Dorsolateral prefrontal cortex (tissue), 120 donors: ENCODE measurements at regions of chr6 and their contacts with region 1.

Region 1: GRCh38 chr6:166999145-166999883 is at the start of gene CEP43:
- DNase-seq: peak; percentile 80 to 96 (median 91)
- H3K4me3 ChIP-seq: peak within 1 kb of the TSS; percentile 77 to 98 (median 94)
- H3K27ac ChIP-seq: peak within 1 kb of the TSS in 55 of 59 donors; percentile 13 to 89 (median 76)
- H3K27me3 ChIP-seq: no peaks in the 10 kb centered on the region
- CTCF ChIP-seq: peak in 50 of 56 donors; percentile 18 to 78 (median 51)
- total RNA-seq, gene CEP43: 17.9 to 39.4 (median 27.8) TPM

Region 2: GRCh38 chr6:166956444-166957086 is 42.7 kb before region 1 on chr6 and contains the start of gene RNASET2:
- intact Hi-C with region 1: loop called in 1 of 2 experiments (anchors 2 kb)
- DNase-seq: peak; percentile 86 to 96 (median 91)
- H3K4me3 ChIP-seq: peak within 1 kb of the TSS; percentile 63 to 99 (median 87)
- H3K27ac ChIP-seq: peak within 1 kb of the TSS in 56 of 59 donors; percentile 28 to 95 (median 85)
- H3K27me3 ChIP-seq: no peaks in the 10 kb centered on the region
- CTCF ChIP-seq: peak in 8 of 56 donors; percentile 10 to 43 (median 21)
- total RNA-seq, gene RNASET2: 26.9 to 141 (median 66.3) TPM

Region 3: GRCh38 chr6:167044696-167045095 is 45.4 kb after region 1 on chr6:
- intact Hi-C with region 1: loop called in 1 of 2 experiments (anchors 5 kb)
- DNase-seq: no peak
- H3K4me3 ChIP-seq: no peak overlapping the region
- H3K27ac ChIP-seq: no peak overlapping the region
- H3K27me3 ChIP-seq: no peaks in the 10 kb centered on the region
- CTCF ChIP-seq: no peak

Region 4: GRCh38 chr6:167141667-167142432 is 142.5 kb after region 1 on chr6:
- intact Hi-C with region 1: loop called in 1 of 2 experiments (anchors 5 kb)
- DNase-seq: peak in 6 of 10 donors; percentile 21 to 73 (median 44)
- H3K4me3 ChIP-seq: no peak overlapping the region
- H3K27ac ChIP-seq: peak overlapping the region in 17 of 59 donors; percentile 6 to 66 (median 51)
- H3K27me3 ChIP-seq: peaks cover 0 to 44% (median 3%) of the 10 kb centered on the region in 45 donors
- CTCF ChIP-seq: peak; percentile 11 to 80 (median 61)